ENCODE measurements at regions of chr9 and their contacts with region 1.

Region 1: DNA sequence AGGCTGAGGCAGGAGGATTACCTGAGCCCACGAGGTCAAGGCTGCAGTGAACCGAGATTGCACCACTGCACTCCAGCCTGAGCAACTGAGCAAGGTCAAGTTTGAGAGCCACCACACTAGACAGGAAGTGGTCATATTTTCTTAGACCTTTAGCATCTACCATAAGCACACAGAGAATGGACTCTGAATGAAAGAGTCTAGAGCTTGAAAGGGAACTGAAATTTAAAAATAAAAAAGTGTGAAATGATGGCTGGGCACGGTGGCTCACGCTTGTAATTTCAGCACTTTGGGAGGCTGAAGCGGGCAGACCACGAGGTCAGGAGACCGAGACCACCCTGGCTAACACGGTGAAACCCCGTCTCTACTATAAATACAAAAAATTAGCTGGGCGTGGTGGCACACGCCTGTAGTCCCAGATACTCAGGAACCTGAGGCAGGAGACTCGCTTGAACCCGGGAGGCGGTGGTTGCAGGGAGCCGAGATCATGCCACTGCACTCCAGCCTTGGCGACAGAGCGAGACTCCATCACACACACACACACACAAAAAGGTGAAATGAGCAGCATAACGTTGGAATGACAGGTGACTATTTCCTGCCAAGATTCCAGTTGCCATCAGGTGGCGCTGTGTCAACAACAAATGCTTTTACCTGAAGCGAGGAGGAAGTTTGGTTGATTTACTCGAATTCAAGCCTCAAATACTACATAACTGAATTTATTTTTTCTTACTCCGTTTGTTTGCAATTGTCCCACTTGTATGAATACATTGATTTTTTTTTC is 21.3 kb upstream of the AK3 start:
- DNase-seq: peak; percentile 72
- ATAC-seq: peak; percentile 73
- H3K4me3 ChIP-seq: peak overlapping the region; percentile 21 to 62 (median 55)
- H3K27ac ChIP-seq: no peak overlapping the region
- H3K4me1 ChIP-seq: peaks cover 23% of the 10 kb centered on the region
- H3K27me3 ChIP-seq: no peaks in the 10 kb centered on the region; a peak in 1 of 5 replicates
- CTCF ChIP-seq: peak; percentile 94
- EP300 ChIP-seq: no peak
- POLR2A ChIP-seq: no peak
- RAD21 ChIP-seq: peak; percentile 81

Region 2: DNA sequence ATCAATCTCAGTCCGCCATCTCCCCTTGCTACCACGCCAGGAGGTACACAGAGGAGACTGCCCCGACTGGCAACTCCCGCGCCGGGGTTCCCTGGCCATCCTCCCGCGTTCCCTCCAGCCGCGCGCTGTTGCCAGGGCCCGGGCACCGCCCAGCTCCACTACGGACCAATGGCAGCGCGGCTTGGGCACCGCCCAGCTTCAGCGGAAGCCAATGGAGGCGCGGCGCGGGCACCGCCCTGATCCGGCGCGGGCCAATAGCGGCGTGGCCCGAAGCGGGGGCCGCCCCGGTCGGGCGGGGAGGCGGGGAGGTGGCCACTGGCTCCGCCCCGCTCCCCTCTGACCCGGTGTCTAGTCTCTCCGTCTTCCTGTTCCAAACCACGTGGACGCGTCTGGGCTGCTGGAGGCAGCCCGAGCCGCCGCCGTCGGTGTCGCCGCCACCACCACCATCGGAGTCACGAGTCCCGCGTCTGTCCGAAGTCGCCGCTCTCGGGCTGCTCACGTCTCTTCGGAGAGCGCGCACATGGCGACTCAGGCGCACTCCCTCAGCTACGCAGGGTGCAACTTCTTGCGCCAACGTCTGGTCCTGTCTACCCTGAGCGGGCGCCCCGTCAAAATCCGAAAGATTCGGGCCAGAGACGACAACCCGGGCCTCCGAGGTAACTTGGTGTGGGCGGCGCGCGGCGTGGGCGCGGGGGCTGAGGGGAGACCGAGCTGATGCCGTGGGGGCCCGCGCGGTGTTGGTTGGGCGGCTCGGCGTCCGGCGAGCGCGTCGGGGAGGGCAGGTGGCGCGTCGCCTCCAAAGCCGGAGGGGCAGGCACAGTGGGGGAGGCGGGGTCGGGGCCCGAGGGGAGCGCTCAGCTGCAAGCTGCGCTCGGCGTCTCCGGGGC is 30.5 kb after region 1 on chr9 and contains the start of gene RCL1:
- CTCF ChIA-PET with region 1: interaction called, 5 read pairs
- POLR2A ChIA-PET with region 1: no interaction called
- in situ Hi-C with region 1: no loop called
- intact Hi-C with region 1: loop called (anchors 1 kb)
- DNase-seq: peak; percentile 88
- ATAC-seq: peak; percentile 97
- H3K4me3 ChIP-seq: peak within 1 kb of the TSS; percentile 71 to 87 (median 73)
- H3K27ac ChIP-seq: peak within 1 kb of the TSS; percentile 88
- H3K4me1 ChIP-seq: peaks cover 48% of the 10 kb centered on the region
- H3K27me3 ChIP-seq: no peaks in the 10 kb centered on the region; a peak in 1 of 5 replicates
- CTCF ChIP-seq: no peak
- EP300 ChIP-seq: peak in 1 of 2 experiments; percentile 65; a peak in 1 of 4 replicates
- POLR2A ChIP-seq: peak; percentile 70 to 72
- RAD21 ChIP-seq: peak; percentile 13; the same call in 1 of the 2 replicates
- total RNA-seq, gene RCL1: 31.6 and 33.9 TPM in 2 replicates

Region 3: GRCh38 chr9:4923580-4924544 is 161.6 kb after region 1 on chr9:
- CTCF ChIA-PET with region 1: interaction called, 59 read pairs
- POLR2A ChIA-PET with region 1: no interaction called
- in situ Hi-C with region 1: loop called (anchors 10 kb)
- intact Hi-C with region 1: loop called (anchors 1 kb)
- DNase-seq: peak; percentile 51
- ATAC-seq: peak; percentile 81
- H3K4me3 ChIP-seq: no peak overlapping the region
- H3K27ac ChIP-seq: no peak overlapping the region
- H3K4me1 ChIP-seq: no peaks in the 10 kb centered on the region
- H3K27me3 ChIP-seq: no peaks in the 10 kb centered on the region
- CTCF ChIP-seq: peak; percentile 64
- EP300 ChIP-seq: no peak
- POLR2A ChIP-seq: no peak
- RAD21 ChIP-seq: peak; percentile 77; the same call in 1 of the 2 replicates

Region 4: DNA sequence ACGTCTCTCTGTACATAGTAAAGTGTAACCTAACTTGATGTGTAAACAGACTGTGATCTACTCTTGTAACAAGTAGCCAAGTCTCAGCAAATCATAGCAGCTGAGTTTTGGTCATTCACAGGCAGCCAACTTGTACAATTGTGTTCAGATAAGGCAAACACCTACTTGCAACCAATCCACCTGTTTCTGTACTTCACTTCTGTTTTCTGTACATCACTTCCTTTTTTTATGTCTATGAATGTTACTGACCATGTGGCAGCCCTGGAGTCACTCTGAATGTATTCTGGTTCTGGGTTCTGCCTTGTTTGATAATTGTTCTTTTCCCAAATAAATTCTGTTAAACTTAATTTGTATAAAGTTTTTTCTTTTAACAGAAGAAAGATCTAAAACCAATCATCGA is 516.2 kb after region 1 on chr9:
- CTCF ChIA-PET with region 1: no interaction called
- POLR2A ChIA-PET with region 1: no interaction called
- in situ Hi-C with region 1: no loop called
- intact Hi-C with region 1: no loop called
- DNase-seq: no peak
- ATAC-seq: no peak
- H3K4me3 ChIP-seq: no peak overlapping the region
- H3K27ac ChIP-seq: no peak overlapping the region
- H3K4me1 ChIP-seq: no peaks in the 10 kb centered on the region
- H3K27me3 ChIP-seq: no peaks in the 10 kb centered on the region
- CTCF ChIP-seq: no peak
- EP300 ChIP-seq: no peak
- POLR2A ChIP-seq: no peak
- RAD21 ChIP-seq: no peak

Region 5: DNA sequence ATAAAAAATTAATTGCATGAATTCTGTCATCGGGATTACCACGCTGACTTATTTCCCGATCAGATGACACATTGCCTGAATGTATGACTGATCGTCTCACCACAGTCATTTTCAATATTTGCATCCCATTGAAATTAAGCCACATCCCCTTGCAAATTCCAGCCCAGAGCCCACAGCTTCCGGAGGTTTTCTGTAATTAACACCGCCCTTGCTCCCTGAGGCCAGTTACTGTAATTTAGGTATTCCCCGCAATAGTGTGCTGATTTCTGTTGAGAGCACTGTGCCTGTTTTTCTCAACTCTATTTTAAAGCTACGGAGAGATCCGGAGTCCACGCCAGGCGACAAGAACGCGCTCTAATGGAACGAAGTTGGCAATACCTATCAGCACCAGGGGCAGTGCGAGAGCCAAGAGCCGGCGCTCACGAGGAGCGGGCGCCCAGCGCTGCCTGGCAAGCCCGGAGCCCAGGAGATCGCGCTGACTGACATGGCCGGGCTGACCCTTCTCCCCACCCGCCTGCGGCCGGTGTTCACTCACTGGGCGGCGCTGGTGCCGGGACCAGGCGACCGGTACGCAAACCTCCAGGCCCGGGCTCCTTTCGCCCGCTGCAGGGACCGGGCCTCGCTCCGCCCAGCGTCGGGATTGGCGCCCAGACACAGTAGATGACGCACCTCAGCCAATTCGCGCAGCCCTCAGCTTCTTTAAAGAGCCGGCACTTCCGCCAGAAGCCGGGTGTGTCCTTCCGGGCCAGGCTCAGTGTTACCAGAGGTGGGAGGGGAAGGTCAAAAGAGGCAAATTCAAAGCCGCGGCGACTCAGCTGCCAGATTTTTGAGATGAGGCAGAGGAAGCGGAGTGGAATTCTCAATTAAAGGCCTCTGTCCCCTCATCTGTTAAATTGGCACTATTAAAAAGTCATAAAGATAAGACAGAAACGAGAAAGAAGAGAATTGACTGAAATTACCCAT is 675.2 kb after region 1 on chr9 and contains the start of gene PLGRKT:
- CTCF ChIA-PET with region 1: no interaction called
- POLR2A ChIA-PET with region 1: no interaction called
- in situ Hi-C with region 1: loop called (anchors 25 kb)
- intact Hi-C with region 1: loop called (anchors 5 kb)
- DNase-seq: peak; percentile 93
- ATAC-seq: peak; percentile 99
- H3K4me3 ChIP-seq: peak within 1 kb of the TSS; percentile 72 to 81 (median 78)
- H3K27ac ChIP-seq: peak within 1 kb of the TSS; percentile 86
- H3K4me1 ChIP-seq: peaks cover 29% of the 10 kb centered on the region
- H3K27me3 ChIP-seq: no peaks in the 10 kb centered on the region; a peak in 1 of 5 replicates
- CTCF ChIP-seq: peak; percentile 68
- EP300 ChIP-seq: 0 out of 4 replicates have a peak, but pooled peaks of 1 of the 2 experiments have one; percentile 14
- POLR2A ChIP-seq: peak; percentile 87 to 88
- RAD21 ChIP-seq: 0 out of 2 replicates have a peak, but pooled peaks have one; percentile 39
- total RNA-seq, gene PLGRKT: 15.8 and 20.2 TPM in 2 replicates

Region 6: DNA sequence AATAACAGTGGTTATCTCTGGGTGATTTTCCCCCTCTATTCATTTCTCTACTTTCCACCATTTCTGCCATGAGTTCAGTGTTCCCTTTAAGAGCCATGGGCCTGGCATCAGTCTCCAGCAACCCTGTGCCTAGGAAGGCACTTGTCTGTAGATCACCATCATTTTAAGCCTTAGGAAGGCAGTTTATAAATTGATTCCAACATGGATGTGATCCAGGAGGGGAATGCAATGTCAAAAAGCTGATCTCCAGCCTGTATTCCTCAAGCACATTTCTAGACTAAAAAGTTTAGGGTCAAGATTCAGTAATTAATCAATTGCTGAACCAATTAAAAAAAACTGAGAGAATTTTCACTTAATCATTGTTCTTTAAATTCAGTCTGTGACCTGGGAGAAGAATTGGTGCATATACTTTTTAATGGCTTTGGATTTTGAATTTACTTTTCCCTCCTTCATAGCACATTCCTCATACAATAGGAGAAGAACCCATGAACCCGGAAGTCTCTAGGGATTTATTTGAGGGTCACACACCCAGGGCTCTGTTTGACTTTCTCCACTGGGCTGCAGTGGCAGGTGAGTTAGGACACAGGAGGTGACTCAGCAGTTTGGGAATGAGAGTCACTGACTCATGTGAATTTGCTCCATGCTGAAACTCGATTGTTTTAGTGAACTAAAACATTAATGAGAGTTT is 1076.7 kb after region 1 on chr9:
- CTCF ChIA-PET with region 1: no interaction called
- POLR2A ChIA-PET with region 1: no interaction called
- in situ Hi-C with region 1: no loop called
- intact Hi-C with region 1: no loop called
- DNase-seq: peak; percentile 96
- ATAC-seq: peak; percentile 88
- H3K4me3 ChIP-seq: no peak overlapping the region
- H3K27ac ChIP-seq: peak overlapping the region; percentile 74
- H3K4me1 ChIP-seq: peaks cover 54% of the 10 kb centered on the region
- H3K27me3 ChIP-seq: no peaks in the 10 kb centered on the region
- CTCF ChIP-seq: no peak
- EP300 ChIP-seq: peak; percentile 50 to 82; a peak in 2 of 4 replicates
- POLR2A ChIP-seq: no peak
- RAD21 ChIP-seq: no peak

Measured in HepG2 (cell line).